GM13976 (cell line): ENCODE measurements at regions of chr7 and their contacts with region 1.

Region 1: GRCh38 chr7:73612598-73613269 is 11.6 kb downstream of the MLXIPL start:
- DNase-seq: no peak
- CTCF ChIP-seq: no peak

Region 2: GRCh38 chr7:73718905-73719805 is 106.4 kb after region 1 on chr7 and contains the start of gene STX1A:
- in situ Hi-C with region 1: loop called (anchors 10 kb)
- DNase-seq: peak; percentile 97
- CTCF ChIP-seq: no peak